Natural killer cell (primary cell): ENCODE measurements at regions of chr18 and their contacts with region 1.

Region 1: GRCh38 chr18:52570975-52571374 is 231.0 kb downstream of the DCC start:
- DNase-seq: no peak
- ATAC-seq: no peak
- H3K4me3 ChIP-seq: no peak overlapping the region
- H3K4me3 Mint-ChIP-seq: no peak overlapping the region
- H3K27ac ChIP-seq: no peak overlapping the region
- H3K27ac Mint-ChIP-seq: no peak overlapping the region
- H3K4me1 ChIP-seq: no peaks in the 10 kb centered on the region
- H3K4me1 Mint-ChIP-seq: no peaks in the 10 kb centered on the region
- H3K27me3 ChIP-seq: no peaks in the 10 kb centered on the region
- H3K27me3 Mint-ChIP-seq: no peaks in the 10 kb centered on the region
- CTCF ChIP-seq: no peak

Region 2: DNA sequence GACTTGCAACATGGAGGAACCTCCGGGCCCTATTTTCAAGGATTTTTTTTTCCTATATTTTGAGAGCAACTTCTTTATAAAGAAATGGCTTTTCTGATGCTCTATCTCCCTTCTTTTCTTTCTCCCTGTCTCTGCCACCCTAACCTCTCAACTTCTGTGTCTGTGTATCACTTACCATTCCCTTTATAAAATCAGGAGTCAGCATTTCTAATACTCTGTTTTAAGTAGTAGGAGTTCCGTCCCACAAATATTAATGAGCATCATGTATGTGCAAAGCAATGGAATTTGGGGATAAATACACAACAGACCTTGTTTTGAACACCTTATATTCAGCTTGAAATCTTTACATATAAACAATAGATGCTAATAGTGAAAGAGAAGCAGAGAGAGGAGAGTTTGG is 37.0 kb after region 1 on chr18:
- intact Hi-C with region 1: loop called (anchors 1 kb)
- DNase-seq: no peak
- ATAC-seq: no peak
- H3K4me3 ChIP-seq: no peak overlapping the region
- H3K4me3 Mint-ChIP-seq: no peak overlapping the region
- H3K27ac ChIP-seq: no peak overlapping the region
- H3K27ac Mint-ChIP-seq: no peak overlapping the region
- H3K4me1 ChIP-seq: no peaks in the 10 kb centered on the region
- H3K4me1 Mint-ChIP-seq: no peaks in the 10 kb centered on the region
- H3K27me3 ChIP-seq: no peaks in the 10 kb centered on the region
- H3K27me3 Mint-ChIP-seq: no peaks in the 10 kb centered on the region
- CTCF ChIP-seq: no peak

Region 3: GRCh38 chr18:52829876-52830405 is 259.0 kb after region 1 on chr18:
- intact Hi-C with region 1: no loop called
- DNase-seq: no peak
- ATAC-seq: no peak
- H3K4me3 ChIP-seq: no peak overlapping the region
- H3K4me3 Mint-ChIP-seq: no peak overlapping the region
- H3K27ac ChIP-seq: no peak overlapping the region
- H3K27ac Mint-ChIP-seq: no peak overlapping the region
- H3K4me1 ChIP-seq: no peaks in the 10 kb centered on the region
- H3K4me1 Mint-ChIP-seq: no peaks in the 10 kb centered on the region
- H3K27me3 ChIP-seq: no peaks in the 10 kb centered on the region
- H3K27me3 Mint-ChIP-seq: no peaks in the 10 kb centered on the region
- CTCF ChIP-seq: no peak